Caco-2 (cell line): ENCODE measurements at regions of chr6 and their contacts with region 1.

Region 1: DNA sequence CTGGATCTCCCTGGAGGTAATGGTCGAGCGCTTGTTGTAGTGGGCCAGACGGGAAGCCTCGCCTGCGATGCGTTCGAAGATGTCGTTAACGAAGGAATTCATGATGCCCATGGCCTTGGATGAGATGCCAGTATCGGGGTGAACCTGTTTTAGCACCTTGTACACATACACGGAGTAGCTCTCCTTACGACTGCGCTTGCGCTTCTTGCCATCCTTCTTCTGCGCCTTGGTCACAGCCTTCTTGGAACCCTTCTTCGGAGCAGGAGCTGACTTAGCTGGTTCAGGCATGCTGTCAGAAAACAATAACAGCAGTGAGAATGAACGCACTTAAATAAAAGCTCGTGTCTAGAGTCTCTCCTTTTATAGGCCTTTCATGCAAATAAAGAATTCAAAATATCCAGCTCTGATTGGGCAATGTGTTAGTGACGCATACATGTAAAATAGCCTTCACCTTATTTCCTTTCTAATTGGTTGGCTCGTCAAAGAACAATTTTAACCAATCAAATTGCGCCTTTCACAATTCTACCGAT is 129.2 kb downstream of the HFE start:
- DNase-seq: peak in 1 of 2 experiments; percentile 85
- H3K4me3 ChIP-seq: peak overlapping the region; percentile 66
- H3K4me3 Mint-ChIP-seq: no peak overlapping the region
- H3K27ac Mint-ChIP-seq: no peak overlapping the region
- H3K4me1 ChIP-seq: no peaks in the 10 kb centered on the region
- H3K4me1 Mint-ChIP-seq: no peaks in the 10 kb centered on the region
- H3K27me3 ChIP-seq: no peaks in the 10 kb centered on the region
- H3K27me3 Mint-ChIP-seq: no peaks in the 10 kb centered on the region
- CTCF ChIP-seq: no peak

Region 2: GRCh38 chr6:26103770-26104456 is 112.5 kb before region 1 on chr6:
- CTCF ChIA-PET with region 1: no interaction called
- POLR2A ChIA-PET with region 1: interaction called, 18 read pairs
- intact Hi-C with region 1: no loop called
- DNase-seq: peak; percentile 91 to 92
- H3K4me3 ChIP-seq: peak overlapping the region; percentile 32
- H3K4me3 Mint-ChIP-seq: peak overlapping the region; percentile 80
- H3K27ac Mint-ChIP-seq: peak overlapping the region; percentile 98
- H3K4me1 ChIP-seq: peaks cover 18% of the 10 kb centered on the region
- H3K4me1 Mint-ChIP-seq: peaks cover 14% of the 10 kb centered on the region
- H3K27me3 ChIP-seq: no peaks in the 10 kb centered on the region
- H3K27me3 Mint-ChIP-seq: peaks cover 5% of the 10 kb centered on the region
- CTCF ChIP-seq: peak; percentile 21 to 27

Region 3: GRCh38 chr6:26156076-26156849 is 60.2 kb before region 1 on chr6:
- CTCF ChIA-PET with region 1: no interaction called
- POLR2A ChIA-PET with region 1: interaction called, 45 read pairs
- intact Hi-C with region 1: no loop called
- DNase-seq: peak; percentile 86 to 93
- H3K4me3 ChIP-seq: peak overlapping the region; percentile 64
- H3K4me3 Mint-ChIP-seq: peak overlapping the region; percentile 86
- H3K27ac Mint-ChIP-seq: peak overlapping the region; percentile 98
- H3K4me1 ChIP-seq: peaks cover 10% of the 10 kb centered on the region
- H3K4me1 Mint-ChIP-seq: peaks cover 45% of the 10 kb centered on the region
- H3K27me3 ChIP-seq: no peaks in the 10 kb centered on the region
- H3K27me3 Mint-ChIP-seq: peaks cover 15% of the 10 kb centered on the region
- CTCF ChIP-seq: no peak

Region 4: DNA sequence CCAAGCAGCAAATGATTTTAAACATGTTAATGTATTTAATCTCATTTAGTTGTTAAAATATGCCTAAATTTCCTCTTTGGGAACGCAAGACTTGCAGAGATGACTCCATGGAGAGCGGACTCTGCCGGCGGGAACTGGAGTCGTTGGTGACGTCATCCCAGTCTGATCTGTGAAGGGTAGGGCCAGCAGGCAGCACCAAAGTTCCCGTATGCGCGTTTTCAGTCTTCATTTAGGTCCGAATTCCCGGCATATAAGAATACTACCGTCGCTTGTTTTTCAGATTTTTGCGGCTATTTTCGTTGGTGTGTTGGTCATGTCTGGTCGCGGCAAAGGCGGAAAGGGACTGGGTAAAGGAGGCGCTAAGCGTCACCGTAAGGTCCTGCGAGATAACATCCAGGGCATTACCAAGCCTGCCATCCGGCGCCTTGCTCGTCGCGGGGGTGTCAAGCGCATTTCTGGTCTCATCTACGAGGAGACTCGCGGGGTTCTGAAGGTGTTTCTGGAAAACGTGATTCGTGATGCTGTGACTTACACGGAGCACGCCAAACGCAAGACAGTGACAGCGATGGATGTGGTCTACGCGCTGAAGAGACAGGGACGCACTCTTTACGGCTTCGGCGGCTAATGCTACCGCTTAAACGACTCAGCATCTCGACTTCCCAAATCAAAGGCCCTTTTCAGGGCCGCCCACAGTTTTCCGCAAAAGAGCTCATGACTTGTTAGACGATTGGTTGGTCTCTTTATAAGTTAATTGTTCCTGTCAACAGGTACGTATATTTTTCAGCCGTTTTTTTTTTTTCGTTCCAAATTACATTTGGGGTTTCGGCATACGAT is 11.9 kb before region 1 on chr6:
- CTCF ChIA-PET with region 1: no interaction called
- POLR2A ChIA-PET with region 1: interaction called, 142 read pairs
- intact Hi-C with region 1: loop called (anchors 1 kb)
- DNase-seq: peak; percentile 94 to 98
- H3K4me3 ChIP-seq: peak overlapping the region; percentile 90
- H3K4me3 Mint-ChIP-seq: no peak overlapping the region
- H3K27ac Mint-ChIP-seq: no peak overlapping the region
- H3K4me1 ChIP-seq: peaks cover 9% of the 10 kb centered on the region
- H3K4me1 Mint-ChIP-seq: peaks cover 4% of the 10 kb centered on the region
- H3K27me3 ChIP-seq: no peaks in the 10 kb centered on the region
- H3K27me3 Mint-ChIP-seq: peaks cover under 1% of the 10 kb centered on the region
- CTCF ChIP-seq: peak in 1 of 2 experiments; percentile 41

Region 5: DNA sequence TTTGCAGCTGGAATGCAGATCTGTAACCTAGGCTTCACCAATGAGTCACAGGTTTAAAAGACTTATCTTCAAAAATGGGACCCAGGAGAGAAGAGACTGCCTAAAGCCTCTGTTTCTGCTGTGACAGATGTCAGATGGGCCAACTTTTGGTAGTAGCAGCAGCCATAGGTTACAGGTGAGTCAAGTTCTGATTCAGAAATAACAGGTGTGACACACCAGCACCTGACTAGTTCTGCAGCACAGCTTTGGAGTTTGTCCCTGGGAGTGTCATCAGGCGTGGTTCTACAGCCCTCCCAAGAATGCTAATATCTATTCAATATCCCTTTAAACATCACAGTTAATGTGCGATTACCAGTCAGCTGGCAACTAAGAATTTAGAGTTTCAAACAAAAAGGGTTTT is 26.7 kb after region 1 on chr6:
- CTCF ChIA-PET with region 1: interaction called, 3 read pairs
- POLR2A ChIA-PET with region 1: interaction called, 20 read pairs
- intact Hi-C with region 1: no loop called
- DNase-seq: peak; percentile 67 to 77
- H3K4me3 ChIP-seq: no peak overlapping the region
- H3K4me3 Mint-ChIP-seq: peak overlapping the region; percentile 59
- H3K27ac Mint-ChIP-seq: peak overlapping the region; percentile 88
- H3K4me1 ChIP-seq: peaks cover 21% of the 10 kb centered on the region
- H3K4me1 Mint-ChIP-seq: peaks cover 17% of the 10 kb centered on the region
- H3K27me3 ChIP-seq: no peaks in the 10 kb centered on the region
- H3K27me3 Mint-ChIP-seq: no peaks in the 10 kb centered on the region
- CTCF ChIP-seq: no peak

Region 6: GRCh38 chr6:26258200-26258977 is 42.0 kb after region 1 on chr6:
- CTCF ChIA-PET with region 1: interaction called, 3 read pairs
- POLR2A ChIA-PET with region 1: interaction called, 40 read pairs
- intact Hi-C with region 1: no loop called
- DNase-seq: no peak
- H3K4me3 ChIP-seq: peak overlapping the region; percentile 53
- H3K4me3 Mint-ChIP-seq: peak overlapping the region; percentile 76
- H3K27ac Mint-ChIP-seq: peak overlapping the region; percentile 84
- H3K4me1 ChIP-seq: peaks cover 54% of the 10 kb centered on the region
- H3K4me1 Mint-ChIP-seq: peaks cover 44% of the 10 kb centered on the region
- H3K27me3 ChIP-seq: no peaks in the 10 kb centered on the region
- H3K27me3 Mint-ChIP-seq: no peaks in the 10 kb centered on the region
- CTCF ChIP-seq: peak in 1 of 2 experiments; percentile 14

Region 7: DNA sequence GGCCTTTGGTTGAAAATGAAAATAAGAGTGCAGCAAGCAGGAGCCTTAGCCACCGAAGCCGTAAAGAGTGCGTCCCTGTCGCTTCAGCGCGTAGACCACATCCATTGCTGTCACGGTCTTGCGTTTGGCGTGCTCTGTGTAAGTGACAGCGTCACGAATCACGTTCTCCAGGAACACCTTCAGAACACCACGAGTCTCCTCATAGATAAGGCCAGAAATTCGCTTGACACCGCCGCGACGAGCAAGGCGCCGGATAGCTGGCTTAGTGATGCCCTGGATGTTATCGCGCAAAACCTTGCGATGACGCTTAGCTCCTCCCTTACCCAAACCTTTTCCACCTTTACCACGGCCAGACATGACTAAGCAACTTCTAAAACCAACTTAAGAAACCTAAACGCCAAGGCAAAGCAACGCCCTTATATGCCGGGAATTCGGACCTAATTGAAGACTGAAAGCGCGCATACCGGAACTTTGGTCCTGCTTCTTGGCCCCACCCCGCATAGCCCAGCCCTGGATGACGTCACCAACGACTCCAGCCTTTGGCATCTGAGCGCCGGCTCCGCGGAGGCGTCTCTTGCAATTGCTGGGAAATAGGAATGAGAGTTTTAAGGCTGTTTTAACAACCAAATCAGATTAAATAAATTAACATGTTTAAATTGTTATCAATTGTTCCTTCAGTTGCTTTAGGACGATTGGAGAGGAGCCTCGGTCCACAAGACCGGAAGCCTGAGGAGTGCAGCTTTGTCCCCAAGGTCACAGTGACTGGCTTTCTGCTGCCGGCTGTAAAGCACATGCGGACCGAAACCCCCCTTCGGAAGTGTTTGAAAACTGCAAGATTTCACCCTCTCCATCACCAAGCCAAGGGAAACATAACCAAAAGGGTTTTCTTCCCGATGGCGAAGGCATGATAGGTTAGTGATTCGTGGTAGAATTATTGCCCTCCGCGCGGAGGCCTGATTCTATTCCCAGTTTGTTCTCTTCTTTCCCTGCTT is 69.0 kb after region 1 on chr6:
- CTCF ChIA-PET with region 1: no interaction called
- POLR2A ChIA-PET with region 1: interaction called, 32 read pairs
- intact Hi-C with region 1: loop called (anchors 1 kb)
- DNase-seq: peak; percentile 97 to 99
- H3K4me3 ChIP-seq: peak overlapping the region; percentile 55
- H3K4me3 Mint-ChIP-seq: peak overlapping the region; percentile 82
- H3K27ac Mint-ChIP-seq: peak overlapping the region; percentile 100
- H3K4me1 ChIP-seq: no peaks in the 10 kb centered on the region
- H3K4me1 Mint-ChIP-seq: peaks cover 17% of the 10 kb centered on the region
- H3K27me3 ChIP-seq: no peaks in the 10 kb centered on the region
- H3K27me3 Mint-ChIP-seq: peaks cover 6% of the 10 kb centered on the region
- CTCF ChIP-seq: no peak